HEK293 (cell line): ENCODE measurements at regions of chr19 and their contacts with region 1.

Region 1: GRCh38 chr19:40549007-40549708 is 27.5 kb upstream of the SHKBP1 start:
- H3K4me3 ChIP-seq: peak overlapping the region; percentile 2
- H3K27ac ChIP-seq: no peak overlapping the region
- H3K4me1 ChIP-seq: peaks cover 9% of the 10 kb centered on the region
- CTCF ChIP-seq: peak; percentile 98

Region 2: DNA sequence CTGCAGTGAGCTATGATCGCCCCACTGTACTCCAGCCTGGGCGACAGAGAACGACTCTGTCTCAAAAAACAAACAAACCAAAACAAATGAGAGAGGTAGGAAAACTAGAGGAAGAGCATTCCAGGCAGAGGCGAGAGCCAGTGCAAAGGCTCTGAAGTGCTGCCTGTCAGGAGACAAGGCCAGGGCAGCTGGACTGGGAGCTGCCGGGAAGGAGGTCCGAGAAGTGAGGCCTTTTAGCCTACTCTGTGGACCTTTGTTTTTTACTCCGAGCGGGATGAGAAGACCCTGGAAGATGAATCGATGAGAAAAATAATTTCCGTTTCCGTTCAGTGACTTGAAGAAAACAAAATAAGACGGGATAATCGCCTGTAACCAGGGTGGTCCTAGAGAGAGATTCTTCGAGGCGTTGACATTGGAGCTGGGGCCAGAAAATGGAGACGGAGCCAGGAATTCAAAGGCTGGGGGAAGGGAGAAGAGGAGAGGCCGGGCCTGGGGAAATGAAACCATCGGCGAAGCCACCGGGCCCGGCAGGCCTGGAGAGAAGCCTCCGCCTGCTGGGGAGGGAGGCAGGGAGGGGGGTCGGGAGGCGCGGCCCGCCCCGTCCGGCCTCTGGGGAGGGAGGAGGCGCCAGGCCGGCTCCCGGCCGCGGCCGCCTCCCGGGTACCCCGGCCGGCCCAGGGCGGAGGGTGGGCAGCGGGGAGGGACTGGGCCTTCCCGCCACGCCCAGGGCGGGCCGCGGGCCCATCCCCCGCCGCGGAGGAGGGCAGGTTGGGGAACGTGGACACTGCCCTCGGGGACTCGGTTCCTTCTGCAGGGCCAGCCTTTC is 115.6 kb before region 1 on chr19:
- CTCF ChIA-PET with region 1: no interaction called
- POLR2A ChIA-PET with region 1: no interaction called
- H3K4me3 ChIP-seq: peak overlapping the region; percentile 34
- H3K27ac ChIP-seq: peak overlapping the region; percentile 100
- H3K4me1 ChIP-seq: peaks cover 16% of the 10 kb centered on the region
- CTCF ChIP-seq: no peak

Region 3: DNA sequence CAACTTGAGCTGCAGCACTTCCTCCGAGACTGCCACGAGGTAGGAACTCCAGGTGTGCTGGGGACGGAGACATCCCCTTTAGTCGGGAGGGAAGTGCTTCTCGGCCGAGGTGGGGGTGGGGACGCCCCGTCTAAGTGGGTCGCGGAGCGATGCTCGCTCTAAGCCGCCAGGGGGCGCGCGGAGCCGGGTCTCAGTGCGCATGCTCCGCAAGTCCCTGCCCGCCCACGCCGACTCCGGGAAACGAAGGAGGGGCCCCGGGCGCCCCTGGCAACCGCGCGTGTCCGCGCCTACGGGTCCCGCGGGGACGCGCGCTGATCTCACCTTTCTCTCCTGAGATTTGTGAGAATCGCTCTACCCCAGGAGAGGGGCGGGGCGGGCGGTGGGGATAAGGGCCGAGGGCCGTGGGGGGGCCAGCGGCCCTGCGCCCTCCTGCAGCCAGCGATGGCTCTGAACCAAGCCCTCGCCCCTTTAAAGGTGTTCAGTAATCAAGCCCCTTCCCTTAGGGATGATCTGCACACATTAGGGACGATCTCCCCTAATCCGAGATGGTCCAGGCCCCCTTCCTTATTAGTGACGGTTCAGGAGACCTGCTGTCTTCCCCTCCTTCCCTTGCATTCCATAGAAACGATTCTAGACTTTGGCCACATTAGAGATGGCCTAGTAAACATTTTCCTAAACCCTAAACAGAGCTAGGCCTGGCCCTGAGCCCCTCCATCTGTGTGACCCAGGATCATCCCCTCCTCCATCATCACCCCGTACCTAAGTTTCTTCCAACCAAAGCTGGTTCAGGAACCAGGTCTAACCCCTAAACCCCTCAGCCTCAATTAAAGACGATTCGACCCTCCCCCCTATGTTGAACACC is 19.8 kb before region 1 on chr19:
- CTCF ChIA-PET with region 1: interaction called, 259 read pairs
- POLR2A ChIA-PET with region 1: interaction called, 3 read pairs
- H3K4me3 ChIP-seq: peak overlapping the region; percentile 19
- H3K27ac ChIP-seq: peak overlapping the region; percentile 39
- H3K4me1 ChIP-seq: peaks cover 17% of the 10 kb centered on the region
- CTCF ChIP-seq: peak; percentile 100

Region 4: GRCh38 chr19:40560092-40560507 is 10.9 kb after region 1 on chr19:
- CTCF ChIA-PET with region 1: interaction called, 132 read pairs
- POLR2A ChIA-PET with region 1: interaction called, 6 read pairs
- H3K4me3 ChIP-seq: no peak overlapping the region
- H3K27ac ChIP-seq: no peak overlapping the region
- H3K4me1 ChIP-seq: no peaks in the 10 kb centered on the region
- CTCF ChIP-seq: no peak

Region 5: DNA sequence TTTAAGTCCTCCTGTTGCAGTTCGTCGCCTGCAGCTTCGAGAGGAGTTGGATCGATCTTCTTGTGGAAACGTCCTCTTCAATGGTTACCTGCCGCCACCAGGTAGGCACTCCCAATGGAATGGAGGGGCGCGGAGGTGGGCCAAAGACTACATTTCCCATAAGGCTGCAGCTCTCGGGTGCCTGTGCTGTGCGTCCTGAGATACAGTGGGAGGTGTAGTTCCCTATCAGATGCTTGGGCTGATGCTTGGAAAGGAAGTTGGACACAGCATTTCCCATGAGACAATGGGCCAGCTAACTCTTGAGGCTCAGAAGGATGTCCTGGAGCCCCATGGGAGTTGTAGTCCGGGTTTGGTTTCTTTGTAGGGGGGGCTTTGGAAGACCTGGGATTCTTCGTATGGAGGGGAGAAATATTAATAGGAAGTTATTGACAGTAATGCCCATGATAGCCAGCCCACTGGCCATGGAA is 29.3 kb after region 1 on chr19:
- CTCF ChIA-PET with region 1: interaction called, 132 read pairs
- POLR2A ChIA-PET with region 1: interaction called, 4 read pairs
- H3K4me3 ChIP-seq: no peak overlapping the region
- H3K27ac ChIP-seq: peak overlapping the region; percentile 11; the same call in 1 of the 2 replicates
- H3K4me1 ChIP-seq: peaks cover 6% of the 10 kb centered on the region
- CTCF ChIP-seq: no peak

Region 6: DNA sequence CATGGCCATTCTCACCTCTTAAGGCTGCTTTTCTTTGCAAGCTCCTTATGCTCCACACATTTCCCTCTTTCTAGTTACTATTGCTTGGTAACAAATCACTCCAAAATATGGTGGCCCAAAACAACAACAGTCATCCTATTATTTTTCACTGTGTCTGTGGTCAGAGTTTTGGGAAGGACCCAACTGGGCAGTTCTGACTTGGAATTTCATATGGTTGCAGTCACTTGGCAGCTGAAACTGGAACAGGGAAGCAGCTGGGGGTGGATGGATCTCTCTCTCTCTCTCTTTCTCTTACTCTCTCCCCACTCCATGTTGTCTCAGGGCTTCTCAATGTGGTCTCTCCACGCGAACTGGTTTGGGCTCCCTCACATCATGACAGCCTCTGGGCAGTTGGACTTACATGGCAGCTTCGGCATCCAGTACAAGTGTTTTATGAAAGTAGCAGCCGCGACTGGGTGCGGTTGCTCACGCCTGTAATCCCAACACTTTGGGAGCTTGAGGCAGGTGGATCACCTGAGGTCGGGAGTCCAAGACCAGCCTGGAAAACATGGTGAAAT is 101.7 kb after region 1 on chr19:
- CTCF ChIA-PET with region 1: interaction called, 10 read pairs
- POLR2A ChIA-PET with region 1: interaction called, 6 read pairs
- H3K4me3 ChIP-seq: no peak overlapping the region
- H3K27ac ChIP-seq: no peak overlapping the region
- H3K4me1 ChIP-seq: peaks cover 11% of the 10 kb centered on the region
- CTCF ChIP-seq: no peak

Region 7: GRCh38 chr19:41276231-41276630 is 727.1 kb after region 1 on chr19:
- CTCF ChIA-PET with region 1: no interaction called
- POLR2A ChIA-PET with region 1: no interaction called
- H3K4me3 ChIP-seq: no peak overlapping the region
- H3K27ac ChIP-seq: no peak overlapping the region
- H3K4me1 ChIP-seq: no peaks in the 10 kb centered on the region
- CTCF ChIP-seq: no peak